Heart right ventricle (tissue), 16 donors: ENCODE measurements at regions of chr19 and their contacts with region 1.

Region 1: GRCh38 chr19:12974301-12975220 is 5.2 kb downstream of the DAND5 start:
- DNase-seq: no peak
- ATAC-seq: peak in 3 of 8 donors; percentile 6 to 19 (median 12)
- H3K4me3 ChIP-seq: no peak overlapping the region
- H3K27ac ChIP-seq: peak overlapping the region in 1 of 10 donors; percentile 9
- H3K4me1 ChIP-seq: peaks cover 0 to 28% (median 9%) of the 10 kb centered on the region in 9 donors
- H3K27me3 ChIP-seq: no peaks in the 10 kb centered on the region
- CTCF ChIP-seq: no peak

Region 2: DNA sequence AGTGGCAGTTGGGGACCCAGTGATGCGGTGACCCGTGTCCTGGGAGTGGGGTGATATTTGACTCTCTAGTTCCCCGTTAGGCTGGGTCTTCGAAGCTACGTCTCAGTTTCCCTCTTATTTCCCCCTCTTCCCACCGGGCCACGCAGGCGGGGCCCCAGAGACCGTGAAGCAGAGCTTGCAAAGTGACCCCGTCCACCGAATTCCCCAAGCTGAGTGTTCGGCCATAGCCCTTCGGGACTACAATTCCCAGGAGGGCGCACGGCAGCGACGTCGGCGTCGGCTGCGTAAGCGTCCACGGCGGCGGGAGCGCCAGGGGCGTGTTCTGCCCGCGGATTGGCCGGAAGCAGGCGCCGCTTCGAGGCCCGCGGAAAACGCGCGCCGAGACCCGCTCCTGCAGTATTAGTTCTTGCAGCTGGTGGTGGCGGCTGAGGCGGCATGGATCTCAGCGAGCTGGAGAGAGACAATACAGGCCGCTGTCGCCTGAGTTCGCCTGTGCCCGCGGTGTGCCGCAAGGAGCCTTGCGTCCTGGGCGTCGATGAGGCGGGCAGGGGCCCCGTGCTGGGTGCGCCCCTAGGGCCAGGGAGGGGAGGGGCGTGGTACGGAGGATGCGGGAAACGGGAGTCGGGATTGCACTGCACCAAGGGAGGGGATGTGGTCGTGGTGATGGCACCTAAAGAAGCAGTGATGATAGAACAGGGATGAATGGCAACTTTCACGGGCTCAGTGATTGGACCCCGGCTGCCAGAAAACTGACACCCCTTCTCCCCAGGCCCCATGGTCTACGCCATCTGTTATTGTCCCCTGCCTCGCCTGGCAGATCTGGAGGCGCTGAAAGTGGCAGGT is 168.1 kb before region 1 on chr19 and contains the start of gene RNASEH2A:
- intact Hi-C with region 1: no loop called
- DNase-seq: peak; percentile 89 to 92
- ATAC-seq: peak; percentile 80 to 94 (median 92)
- H3K4me3 ChIP-seq: peak within 1 kb of the TSS; percentile 27 to 80 (median 62)
- H3K27ac ChIP-seq: peak within 1 kb of the TSS in 9 of 10 donors; percentile 41 to 81 (median 66)
- H3K4me1 ChIP-seq: peaks cover 6 to 26% (median 17%) of the 10 kb centered on the region in 9 donors
- H3K27me3 ChIP-seq: peaks cover 0 to 12% (median 0%) of the 10 kb centered on the region in 7 donors
- CTCF ChIP-seq: peak in 2 of 9 donors; percentile 10 to 21
- total RNA-seq, gene RNASEH2A: 1.9 to 5.7 (median 4.1) TPM

Region 3: GRCh38 chr19:13099073-13099999 is 124.8 kb after region 1 on chr19:
- intact Hi-C with region 1: loop called in 2 of 10 experiments (anchors 2 to 5 kb)
- DNase-seq: peak; percentile 81 to 82
- ATAC-seq: peak in 6 of 8 donors; percentile 4 to 41 (median 26)
- H3K4me3 ChIP-seq: peak overlapping the region; percentile 21 to 65 (median 47)
- H3K27ac ChIP-seq: peak overlapping the region; percentile 83 to 96 (median 94)
- H3K4me1 ChIP-seq: peaks cover 30 to 97% (median 91%) of the 10 kb centered on the region in 9 donors
- H3K27me3 ChIP-seq: no peaks in the 10 kb centered on the region
- CTCF ChIP-seq: peak in 1 of 9 donors; percentile 9

Region 4: DNA sequence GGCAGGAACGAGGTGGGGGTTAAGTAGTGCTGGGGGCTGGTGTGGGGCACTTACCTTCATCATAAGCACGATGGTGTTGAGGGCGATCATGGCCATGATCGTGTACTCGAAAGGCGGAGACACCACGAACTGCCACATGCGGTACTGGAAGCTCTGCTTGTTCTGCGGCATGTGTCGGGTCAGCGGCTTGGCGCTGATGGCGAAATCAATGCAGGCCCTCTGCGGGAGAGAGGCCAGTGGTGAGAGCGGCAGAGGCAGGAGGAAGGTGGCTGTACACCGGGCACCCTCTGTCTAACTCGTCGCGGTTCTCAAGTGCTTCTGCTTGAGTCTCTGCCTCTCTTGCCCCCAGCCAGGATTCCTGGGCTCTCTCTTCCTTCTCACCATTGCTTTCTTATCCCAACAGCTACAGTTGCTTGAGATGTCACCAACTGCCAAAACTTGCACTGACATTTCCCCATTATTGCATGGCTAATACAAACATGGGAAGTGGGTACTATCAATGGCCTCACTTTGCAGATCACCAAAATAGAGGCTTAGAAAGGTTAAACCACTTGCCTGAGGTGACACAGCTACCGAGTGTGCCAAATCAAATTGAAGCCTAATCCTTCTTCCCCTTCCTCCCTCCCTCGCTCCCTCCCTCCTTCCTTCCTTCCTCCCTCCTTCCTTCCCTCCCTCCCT is 280.6 kb after region 1 on chr19:
- intact Hi-C with region 1: loop called in 6 of 10 experiments (anchors 2 to 10 kb)
- DNase-seq: no peak
- ATAC-seq: no peak
- H3K4me3 ChIP-seq: no peak overlapping the region
- H3K27ac ChIP-seq: no peak overlapping the region
- H3K4me1 ChIP-seq: no peaks in the 10 kb centered on the region
- H3K27me3 ChIP-seq: peaks cover 0 to 14% (median 4%) of the 10 kb centered on the region in 7 donors
- CTCF ChIP-seq: no peak

Region 5: DNA sequence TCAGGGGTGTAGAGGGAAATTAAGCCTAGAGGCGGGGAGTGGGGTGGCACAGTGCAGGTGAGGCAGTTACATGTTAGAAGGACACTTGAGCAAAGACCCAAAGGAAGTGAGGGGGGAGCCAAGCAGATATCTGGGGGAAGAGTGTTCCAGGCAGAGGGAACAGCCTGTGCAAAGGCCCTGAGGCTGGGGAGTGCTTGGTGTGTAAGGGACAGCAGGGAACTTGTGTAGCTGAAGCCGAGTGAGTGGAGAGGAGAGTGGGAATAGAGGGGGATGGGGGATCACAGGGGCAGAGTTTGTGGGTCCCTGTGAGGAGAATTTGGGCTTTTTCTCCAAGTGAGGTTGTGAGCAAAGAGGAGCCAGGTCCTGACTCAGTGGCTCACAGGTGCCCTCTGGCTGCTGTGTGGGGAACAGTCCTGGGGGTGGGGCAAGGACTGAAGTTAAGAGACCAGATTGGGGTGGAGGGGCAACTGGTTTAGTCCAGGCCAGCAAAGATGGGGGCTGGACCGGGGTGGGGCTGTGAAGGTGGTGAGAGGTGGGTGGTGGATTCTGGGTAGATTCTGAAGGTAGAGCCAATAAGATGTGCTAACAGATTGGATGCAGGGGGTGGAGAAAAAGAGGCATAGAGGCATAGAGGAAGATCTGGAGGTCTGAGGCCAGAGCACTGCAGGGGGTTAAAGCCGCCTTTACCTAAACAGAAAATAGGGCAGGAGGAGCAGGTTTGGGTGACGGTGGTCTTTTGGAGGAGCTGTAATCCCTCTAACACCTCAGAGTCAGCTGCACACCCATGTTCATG is 456.4 kb after region 1 on chr19:
- intact Hi-C with region 1: loop called in 1 of 10 experiments (anchors 10 kb)
- DNase-seq: peak; percentile 17 to 35
- ATAC-seq: peak in 3 of 8 donors; percentile 42 to 54 (median 48)
- H3K4me3 ChIP-seq: no peak overlapping the region
- H3K27ac ChIP-seq: no peak overlapping the region
- H3K4me1 ChIP-seq: peaks cover 0 to 5% (median 0%) of the 10 kb centered on the region in 9 donors
- H3K27me3 ChIP-seq: no peaks in the 10 kb centered on the region
- CTCF ChIP-seq: peak in 8 of 9 donors; percentile 33 to 68 (median 58)

Region 6: GRCh38 chr19:13597640-13598039 is 623.1 kb after region 1 on chr19:
- intact Hi-C with region 1: loop called in 3 of 10 experiments (anchors 10 kb)
- DNase-seq: peak in 1 of 2 donors; percentile 48
- ATAC-seq: peak; percentile 68 to 92 (median 78)
- H3K4me3 ChIP-seq: no peak overlapping the region
- H3K27ac ChIP-seq: no peak overlapping the region
- H3K4me1 ChIP-seq: no peaks in the 10 kb centered on the region
- H3K27me3 ChIP-seq: peaks cover 0 to 52% (median 22%) of the 10 kb centered on the region in 7 donors
- CTCF ChIP-seq: peak; percentile 27 to 76 (median 65)